HEK293 (cell line): ENCODE measurements at regions of chr19 and their contacts with region 1.

Region 1: GRCh38 chr19:23249911-23250649 is at the start of gene ZNF724:
- H3K4me3 ChIP-seq: peak within 1 kb of the TSS; percentile 92
- H3K27ac ChIP-seq: peak within 1 kb of the TSS; percentile 85
- H3K4me1 ChIP-seq: no peaks in the 10 kb centered on the region
- CTCF ChIP-seq: no peak

Region 2: GRCh38 chr19:23273590-23274413 is 23.7 kb after region 1 on chr19:
- CTCF ChIA-PET with region 1: no interaction called
- POLR2A ChIA-PET with region 1: interaction called, 50 read pairs
- H3K4me3 ChIP-seq: peak overlapping the region; percentile 87
- H3K27ac ChIP-seq: peak overlapping the region; percentile 87
- H3K4me1 ChIP-seq: no peaks in the 10 kb centered on the region
- CTCF ChIP-seq: 0 out of 2 replicates have a peak, but pooled peaks have one; percentile 9